SK-N-SH (cell line): ENCODE measurements at regions of chr12 and their contacts with region 1.

Region 1: DNA sequence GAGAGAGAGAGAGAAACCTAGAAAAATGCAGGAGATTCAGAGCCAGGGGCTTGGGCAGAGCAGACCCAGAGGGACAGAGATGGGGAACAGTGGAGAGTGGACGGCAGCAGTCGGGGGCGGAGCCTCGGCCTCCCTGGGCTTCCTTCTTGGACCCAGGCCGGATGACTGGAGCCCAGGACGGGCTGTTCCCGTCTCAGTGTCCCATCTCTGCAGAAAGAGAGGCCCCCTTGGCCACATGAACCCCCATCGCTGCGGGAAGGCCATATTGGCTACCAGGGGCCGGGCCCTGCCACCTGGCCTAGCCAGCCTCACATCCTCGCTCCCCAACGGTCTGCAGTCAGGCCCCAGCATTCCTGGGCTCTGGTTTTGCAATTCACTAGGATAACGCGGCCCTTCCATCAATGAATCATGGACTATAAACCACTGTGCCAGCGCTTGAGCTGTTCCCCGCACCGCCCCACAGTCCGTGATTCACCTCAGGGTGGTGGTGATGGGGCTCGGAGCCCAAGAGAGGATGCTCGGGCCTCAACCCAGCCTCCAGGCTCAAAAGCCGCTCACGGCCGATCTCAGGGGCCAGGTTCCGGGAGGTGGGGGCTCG is 116.5 kb downstream of the RFLNA start:
- DNase-seq: peak; percentile 69
- H3K4me3 ChIP-seq: no peak overlapping the region
- H3K27ac ChIP-seq: peak overlapping the region; percentile 81 to 93
- H3K4me1 ChIP-seq: peaks cover 22 to 78% of the 10 kb centered on the region in 2 experiments; a peak in 3 of 4 replicates
- H3K27me3 ChIP-seq: no peaks in the 10 kb centered on the region
- CTCF ChIP-seq: no peak
- EP300 ChIP-seq: peak in 1 of 2 experiments; percentile 59; a peak in 1 of 4 replicates
- RAD21 ChIP-seq: no peak

Region 2: GRCh38 chr12:123787466-123787865 is 623.9 kb before region 1 on chr12:
- CTCF ChIA-PET with region 1: no interaction called
- POLR2A ChIA-PET with region 1: no interaction called
- DNase-seq: no peak
- H3K4me3 ChIP-seq: no peak overlapping the region
- H3K27ac ChIP-seq: no peak overlapping the region
- H3K4me1 ChIP-seq: no peaks in the 10 kb centered on the region
- H3K27me3 ChIP-seq: peaks cover 5% of the 10 kb centered on the region; the same call in 1 of the 2 replicates
- CTCF ChIP-seq: no peak
- EP300 ChIP-seq: no peak
- RAD21 ChIP-seq: no peak

Region 3: DNA sequence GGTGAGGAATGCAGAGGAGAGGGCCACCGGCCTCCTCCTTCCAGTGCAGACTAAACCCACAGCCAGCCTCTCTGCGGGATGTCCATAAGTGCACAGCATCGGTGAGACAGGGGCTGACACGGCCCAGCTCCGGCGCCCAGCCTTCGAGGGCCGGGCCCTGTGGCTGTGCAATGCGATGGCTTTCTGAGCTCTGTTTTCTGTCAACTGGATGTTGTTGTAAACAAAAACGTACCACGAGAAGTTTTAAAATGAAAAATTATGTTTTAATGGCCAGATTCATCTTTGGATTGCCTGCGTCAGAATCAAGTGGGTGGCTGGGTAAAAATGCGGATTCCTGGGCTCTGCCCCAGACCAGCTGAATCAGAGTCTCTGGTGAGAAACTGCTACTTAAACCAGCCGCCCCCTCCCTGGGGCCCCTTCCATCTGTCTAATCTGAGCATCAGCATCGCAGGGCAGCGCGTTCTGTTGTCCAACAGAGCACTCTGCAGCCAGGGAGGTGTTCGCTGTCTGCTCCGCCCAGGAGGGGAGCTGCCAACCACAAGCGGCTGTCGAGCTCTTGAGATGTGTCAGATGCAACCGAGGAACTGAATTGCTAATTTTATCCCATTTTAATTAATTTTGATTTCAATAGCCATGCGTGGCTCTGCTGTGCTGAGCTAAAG is 16.9 kb after region 1 on chr12:
- CTCF ChIA-PET with region 1: interaction called, 12 read pairs
- POLR2A ChIA-PET with region 1: no interaction called
- DNase-seq: peak; percentile 91
- H3K4me3 ChIP-seq: no peak overlapping the region
- H3K27ac ChIP-seq: peak overlapping the region; percentile 23 to 95; a peak in 2 of 4 replicates
- H3K4me1 ChIP-seq: peaks cover 18 to 88% of the 10 kb centered on the region in 2 experiments; a peak in 3 of 4 replicates
- H3K27me3 ChIP-seq: no peaks in the 10 kb centered on the region
- CTCF ChIP-seq: no peak
- EP300 ChIP-seq: peak in 1 of 2 experiments; percentile 80; a peak in 2 of 4 replicates
- RAD21 ChIP-seq: peak; percentile 52